Ascending aorta (tissue), 2 donors: ENCODE measurements at regions of chr14 and their contacts with region 1.

Region 1: GRCh38 chr14:59126710-59127432 is 61.6 kb upstream of the DAAM1 start:
- DNase-seq: no peak
- H3K4me3 ChIP-seq: no peak overlapping the region
- H3K27ac ChIP-seq: no peak overlapping the region
- H3K4me1 ChIP-seq: no peaks in the 10 kb centered on the region
- H3K27me3 ChIP-seq: no peaks in the 10 kb centered on the region
- CTCF ChIP-seq: peak; percentile 77 to 81 (median 78)

Region 2: GRCh38 chr14:59107819-59108428 is 18.9 kb before region 1 on chr14:
- intact Hi-C with region 1: no loop called
- DNase-seq: no peak
- H3K4me3 ChIP-seq: no peak overlapping the region
- H3K27ac ChIP-seq: no peak overlapping the region
- H3K4me1 ChIP-seq: no peaks in the 10 kb centered on the region
- H3K27me3 ChIP-seq: no peaks in the 10 kb centered on the region
- CTCF ChIP-seq: no peak

Region 3: GRCh38 chr14:59576332-59577294 is 449.7 kb after region 1 on chr14 and contains the start of gene CCDC175:
- intact Hi-C with region 1: loop called (anchors 2 kb)
- DNase-seq: peak; percentile 40 to 87
- H3K4me3 ChIP-seq: peak within 1 kb of the TSS; percentile 42 to 65
- H3K27ac ChIP-seq: no peak within 1 kb of the TSS
- H3K4me1 ChIP-seq: no peaks in the 10 kb centered on the region
- H3K27me3 ChIP-seq: no peaks in the 10 kb centered on the region
- CTCF ChIP-seq: peak; percentile 41 to 64 (median 56)
- total RNA-seq, gene CCDC175: not detected

Region 4: GRCh38 chr14:60506462-60506984 is 1379.7 kb after region 1 on chr14:
- intact Hi-C with region 1: no loop called
- DNase-seq: no peak
- H3K4me3 ChIP-seq: no peak overlapping the region
- H3K27ac ChIP-seq: no peak overlapping the region
- H3K4me1 ChIP-seq: peaks cover 4 to 15% of the 10 kb centered on the region in 2 donors
- H3K27me3 ChIP-seq: peaks cover 18% of the 10 kb centered on the region
- CTCF ChIP-seq: no peak